ENCODE measurements at regions of chr7 and their contacts with region 1.

Region 1: DNA sequence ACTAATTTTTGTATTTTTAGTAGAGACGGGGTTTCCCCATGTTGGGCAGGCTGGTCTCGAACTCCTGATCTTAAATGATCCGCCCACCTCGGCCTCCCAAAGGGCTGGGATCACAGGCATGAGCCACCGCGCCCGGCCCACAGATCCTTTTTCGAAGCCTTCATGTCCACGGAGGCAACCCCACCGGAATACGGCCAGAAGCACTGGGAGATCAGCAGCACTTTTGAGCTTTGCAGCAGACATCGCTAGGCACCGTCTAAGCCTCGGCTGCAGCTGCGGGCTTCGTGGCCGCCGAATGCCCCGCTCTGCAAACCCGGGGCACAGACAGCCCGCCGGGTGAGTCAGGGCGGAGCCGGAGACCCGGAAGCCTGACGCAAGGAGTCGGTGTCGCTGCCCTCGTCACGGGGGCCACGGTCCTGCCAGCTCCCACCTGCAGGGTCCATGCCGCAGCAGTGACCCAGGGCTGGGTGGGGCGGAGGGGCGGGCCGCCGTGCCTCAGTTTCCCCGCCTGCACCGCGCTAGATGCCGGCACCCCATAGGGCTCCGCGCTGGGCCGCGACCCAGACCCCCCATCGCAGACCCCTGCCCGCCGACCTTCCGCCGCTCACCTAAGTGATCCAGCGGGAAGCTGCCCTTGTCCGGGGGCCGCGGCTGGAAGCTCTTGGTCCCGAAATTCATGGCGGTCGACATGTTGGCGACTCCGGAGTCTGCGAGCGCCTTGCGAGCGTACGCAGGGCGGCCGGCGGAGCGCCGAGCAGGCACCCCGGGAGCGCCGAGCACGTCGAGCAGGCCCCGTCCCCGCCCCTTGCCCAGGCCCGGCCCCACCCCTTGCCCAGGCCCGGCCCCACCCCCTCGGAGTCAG is at the start of gene COX19:
- DNase-seq: peak; percentile 75
- ATAC-seq: peak; percentile 44
- H3K4me3 ChIP-seq: peak within 1 kb of the TSS; percentile 85 to 100 (median 98)
- H3K27ac ChIP-seq: peak within 1 kb of the TSS; percentile 100
- H3K4me1 ChIP-seq: peaks cover 71% of the 10 kb centered on the region
- H3K27me3 ChIP-seq: no peaks in the 10 kb centered on the region; a peak in 1 of 5 replicates
- CTCF ChIP-seq: peak; percentile 10; the same call in 1 of the 2 replicates
- EP300 ChIP-seq: 0 out of 4 replicates have a peak, but pooled peaks of 1 of the 2 experiments have one; percentile 43
- POLR2A ChIP-seq: peak in 1 of 2 experiments; percentile 79; a peak in 2 of 4 replicates
- RAD21 ChIP-seq: peak; percentile 44
- total RNA-seq, gene COX19: 6.5 and 11.5 TPM in 2 replicates

Region 2: GRCh38 chr7:901381-902154 is 73.5 kb before region 1 on chr7:
- CTCF ChIA-PET with region 1: no interaction called
- POLR2A ChIA-PET with region 1: interaction called, 23 read pairs
- in situ Hi-C with region 1: no loop called
- intact Hi-C with region 1: no loop called
- DNase-seq: peak; percentile 85
- ATAC-seq: peak; percentile 80
- H3K4me3 ChIP-seq: peak overlapping the region in 1 of 3 experiments; percentile 43; a peak in 1 of 6 replicates
- H3K27ac ChIP-seq: peak overlapping the region; percentile 70
- H3K4me1 ChIP-seq: peaks cover 16% of the 10 kb centered on the region
- H3K27me3 ChIP-seq: no peaks in the 10 kb centered on the region
- CTCF ChIP-seq: no peak
- EP300 ChIP-seq: 0 out of 4 replicates have a peak, but pooled peaks of 1 of the 2 experiments have one; percentile 36
- POLR2A ChIP-seq: no peak
- RAD21 ChIP-seq: no peak

Region 3: GRCh38 chr7:954330-955238 is 20.5 kb before region 1 on chr7 and contains the start of gene ADAP1:
- CTCF ChIA-PET with region 1: no interaction called
- POLR2A ChIA-PET with region 1: interaction called, 95 read pairs
- in situ Hi-C with region 1: no loop called
- intact Hi-C with region 1: no loop called
- DNase-seq: no peak
- ATAC-seq: peak; percentile 7; the same call in 2 of the 3 replicates
- H3K4me3 ChIP-seq: peak within 1 kb of the TSS; percentile 59 to 81 (median 76)
- H3K27ac ChIP-seq: no peak within 1 kb of the TSS
- H3K4me1 ChIP-seq: peaks cover 60% of the 10 kb centered on the region
- H3K27me3 ChIP-seq: no peaks in the 10 kb centered on the region
- CTCF ChIP-seq: peak; percentile 43; the same call in 1 of the 2 replicates
- EP300 ChIP-seq: no peak
- POLR2A ChIP-seq: no peak
- RAD21 ChIP-seq: peak; percentile 89
- total RNA-seq, gene ADAP1: 18.3 and 24.6 TPM in 2 replicates

Region 4: DNA sequence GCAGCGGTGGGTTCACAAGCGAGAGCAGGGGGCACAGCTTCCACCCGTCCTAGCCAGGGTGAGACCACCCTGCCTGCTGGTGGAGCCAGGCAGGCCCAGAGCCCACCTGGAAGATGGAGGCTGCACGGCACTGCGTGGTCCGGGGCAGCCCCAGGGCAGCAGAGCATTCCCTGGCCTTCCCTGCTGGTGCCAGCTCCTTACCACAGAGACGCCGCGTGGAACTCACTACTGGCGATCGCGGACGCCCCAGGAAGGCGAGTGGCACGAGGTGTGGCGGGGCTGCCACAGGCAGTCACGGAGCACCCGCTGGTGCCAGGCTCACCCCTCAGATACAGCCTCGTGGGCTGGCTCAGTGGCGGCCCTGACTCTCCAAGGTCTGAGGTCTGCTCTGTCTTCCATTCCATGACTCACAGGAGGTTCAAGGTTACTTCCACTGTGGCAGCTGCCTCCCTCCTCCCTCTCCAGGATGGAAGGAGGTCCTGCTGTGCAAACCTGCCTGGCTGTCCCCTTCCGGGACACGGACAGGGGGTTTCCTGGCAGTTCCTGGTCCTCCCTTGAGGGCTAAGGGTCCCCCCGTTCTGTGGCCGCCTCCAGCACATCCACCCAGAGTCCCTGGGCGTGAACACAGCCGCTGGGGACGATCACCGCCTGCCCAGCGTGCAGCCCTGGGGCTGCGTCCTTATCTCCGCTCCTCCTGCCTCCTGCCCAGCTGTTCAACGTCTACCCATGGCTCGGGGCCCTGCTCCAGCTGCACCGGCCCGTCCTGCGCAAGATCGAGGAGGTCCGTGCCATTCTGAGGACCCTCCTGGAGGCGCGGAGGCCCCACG is 11.1 kb after region 1 on chr7:
- CTCF ChIA-PET with region 1: no interaction called
- POLR2A ChIA-PET with region 1: interaction called, 292 read pairs
- in situ Hi-C with region 1: no loop called
- intact Hi-C with region 1: no loop called
- DNase-seq: no peak
- ATAC-seq: peak; percentile 11; the same call in 2 of the 3 replicates
- H3K4me3 ChIP-seq: no peak overlapping the region
- H3K27ac ChIP-seq: no peak overlapping the region
- H3K4me1 ChIP-seq: peaks cover 59% of the 10 kb centered on the region
- H3K27me3 ChIP-seq: no peaks in the 10 kb centered on the region
- CTCF ChIP-seq: no peak
- EP300 ChIP-seq: no peak
- POLR2A ChIP-seq: no peak
- RAD21 ChIP-seq: no peak

Region 5: DNA sequence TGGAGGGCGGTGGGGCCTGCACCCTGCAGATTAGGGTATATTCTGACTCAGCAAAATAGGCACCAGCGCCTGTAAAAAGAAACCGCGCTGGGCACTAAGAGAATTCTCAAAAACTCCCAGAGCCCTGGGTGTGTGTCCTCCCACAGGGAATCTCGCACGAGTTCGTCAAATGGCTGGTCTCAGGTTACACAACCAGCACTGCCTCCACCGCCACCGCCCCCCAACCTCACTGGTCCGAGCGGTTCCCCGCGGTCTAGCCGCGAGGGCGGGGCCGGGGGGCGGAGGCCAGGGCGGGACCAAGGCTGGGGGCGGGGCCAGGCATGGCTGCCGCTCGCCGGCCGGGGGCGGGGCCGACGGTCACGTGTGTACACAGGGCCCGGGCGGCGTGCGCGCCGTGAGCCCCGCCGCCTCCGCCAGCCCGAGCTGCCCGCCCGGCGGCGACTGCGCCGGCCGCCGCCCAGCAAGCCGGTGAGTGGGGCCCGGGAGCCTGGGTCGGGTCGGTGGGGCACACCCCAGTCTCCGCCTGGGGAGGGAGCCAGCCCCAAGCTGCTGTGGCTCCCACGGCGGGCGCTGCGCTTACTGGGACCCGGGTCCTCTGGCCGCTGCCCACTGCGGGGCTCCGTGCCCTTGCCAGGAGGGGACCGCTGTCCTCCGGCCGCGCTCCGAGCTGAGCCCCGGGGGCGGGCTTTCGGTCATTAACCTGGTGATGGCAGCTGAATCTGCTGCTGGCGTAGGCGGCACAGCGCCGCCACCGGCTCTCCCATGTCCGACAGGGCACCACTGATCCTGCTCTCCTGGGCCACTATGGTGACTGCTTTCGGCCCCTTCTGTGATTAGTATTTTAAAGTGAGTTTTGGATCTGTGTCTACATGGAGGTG is 69.4 kb after region 1 on chr7 and contains the start of gene GPR146:
- CTCF ChIA-PET with region 1: no interaction called
- POLR2A ChIA-PET with region 1: interaction called, 11 read pairs
- in situ Hi-C with region 1: no loop called
- intact Hi-C with region 1: no loop called
- DNase-seq: peak; percentile 94
- ATAC-seq: peak; percentile 86
- H3K4me3 ChIP-seq: peak within 1 kb of the TSS; percentile 72 to 85 (median 73)
- H3K27ac ChIP-seq: peak within 1 kb of the TSS; percentile 94
- H3K4me1 ChIP-seq: peaks cover 81% of the 10 kb centered on the region
- H3K27me3 ChIP-seq: no peaks in the 10 kb centered on the region; a peak in 2 of 5 replicates
- CTCF ChIP-seq: peak; percentile 69
- EP300 ChIP-seq: peak in 1 of 2 experiments; percentile 25; a peak in 1 of 4 replicates
- POLR2A ChIP-seq: peak; percentile 35 to 63; a peak in 2 of 4 replicates
- RAD21 ChIP-seq: peak; percentile 67
- total RNA-seq, gene GPR146: 0.84 and 2.0 TPM in 2 replicates

Region 6: DNA sequence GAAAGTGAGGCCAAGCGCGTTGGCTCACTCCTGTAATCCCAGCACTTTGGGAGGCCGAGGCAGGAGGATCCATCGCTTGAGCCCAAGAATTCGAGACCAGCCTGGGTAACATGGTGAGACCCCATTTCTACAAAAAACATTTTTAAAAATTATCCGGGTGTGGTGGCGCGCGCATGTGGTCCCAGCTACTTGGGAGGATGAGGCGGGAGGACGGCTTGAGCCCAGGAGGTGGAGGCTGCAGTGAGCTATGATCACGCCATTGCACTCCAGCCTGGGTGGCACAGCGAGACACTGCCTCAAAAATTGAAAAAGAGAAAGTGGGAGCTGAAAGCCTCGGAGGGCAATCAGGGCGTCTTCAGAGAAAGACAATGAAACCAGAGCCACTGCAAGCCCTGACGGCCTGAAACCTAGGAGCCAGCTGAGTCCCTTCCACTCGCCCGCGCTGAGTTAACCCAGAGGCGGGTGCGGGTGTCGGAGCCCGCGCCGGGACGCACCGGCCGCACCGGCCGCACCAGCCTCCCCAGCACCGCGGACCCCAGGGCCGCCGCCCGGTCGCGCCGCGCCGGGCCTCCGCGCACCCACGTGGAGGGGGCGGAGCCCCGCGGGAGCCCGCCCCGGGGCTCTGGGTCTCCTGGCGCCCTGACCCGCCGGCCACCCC is 162.6 kb after region 1 on chr7:
- CTCF ChIA-PET with region 1: no interaction called
- POLR2A ChIA-PET with region 1: interaction called, 14 read pairs
- in situ Hi-C with region 1: no loop called
- intact Hi-C with region 1: no loop called
- DNase-seq: no peak
- ATAC-seq: peak; percentile 84
- H3K4me3 ChIP-seq: peak overlapping the region; percentile 83 to 97 (median 96)
- H3K27ac ChIP-seq: peak overlapping the region; percentile 46
- H3K4me1 ChIP-seq: peaks cover 13% of the 10 kb centered on the region; the same call in 1 of the 2 replicates
- H3K27me3 ChIP-seq: no peaks in the 10 kb centered on the region
- CTCF ChIP-seq: no peak
- EP300 ChIP-seq: no peak
- POLR2A ChIP-seq: no peak
- RAD21 ChIP-seq: no peak